BJ (cell line): ENCODE measurements at regions of chr12 and their contacts with region 1.

Region 1: DNA sequence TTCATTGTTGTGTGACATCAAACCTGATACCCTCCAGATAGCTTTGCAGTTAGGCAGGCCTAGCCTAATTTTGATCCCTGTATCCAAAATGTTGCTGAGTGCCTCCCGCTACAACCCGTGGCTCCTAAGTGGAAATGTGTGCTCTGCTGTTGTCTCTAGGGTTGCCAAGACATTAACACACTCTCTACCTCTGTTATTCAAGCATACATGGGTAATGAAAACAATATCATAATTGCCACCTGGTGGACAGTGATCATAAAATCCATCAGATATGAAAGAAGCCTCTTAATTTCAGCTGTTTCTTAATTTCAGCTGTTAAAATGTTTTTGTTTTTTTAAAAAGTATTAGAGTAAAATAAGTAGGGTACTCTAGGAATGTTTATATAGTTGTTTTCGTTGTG is 93.5 kb downstream of the PLEKHA5 start:
- DNase-seq: no peak
- H3K4me3 ChIP-seq: no peak overlapping the region
- H3K27me3 ChIP-seq: no peaks in the 10 kb centered on the region
- CTCF ChIP-seq: peak; percentile 5; the same call in 1 of the 2 replicates

Region 2: DNA sequence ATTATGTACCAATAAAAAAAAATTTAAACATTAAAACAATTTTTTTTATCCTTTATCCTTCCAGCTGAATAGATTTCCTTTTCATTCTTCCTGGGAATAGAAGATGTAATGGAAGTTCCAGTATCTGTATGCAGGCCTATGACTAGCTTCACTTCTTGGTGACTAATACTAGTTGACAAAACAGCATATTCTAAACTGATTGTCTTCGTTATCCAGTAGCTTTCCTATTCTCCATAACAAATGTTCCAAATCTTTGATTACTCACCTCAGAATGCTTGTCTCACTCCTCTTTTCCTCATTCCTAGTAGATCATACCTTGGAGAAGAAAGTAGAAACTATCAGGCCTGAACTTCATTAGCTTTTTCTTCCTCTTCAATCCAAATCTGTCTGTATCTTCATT is 22.8 kb before region 1 on chr12:
- CTCF ChIA-PET with region 1: interaction called, 10 read pairs
- POLR2A ChIA-PET with region 1: no interaction called
- DNase-seq: no peak
- H3K4me3 ChIP-seq: no peak overlapping the region
- H3K27me3 ChIP-seq: no peaks in the 10 kb centered on the region
- CTCF ChIP-seq: no peak